Transverse colon (tissue), 4 donors: ENCODE measurements at regions of chr4 and their contacts with region 1.

Region 1: DNA sequence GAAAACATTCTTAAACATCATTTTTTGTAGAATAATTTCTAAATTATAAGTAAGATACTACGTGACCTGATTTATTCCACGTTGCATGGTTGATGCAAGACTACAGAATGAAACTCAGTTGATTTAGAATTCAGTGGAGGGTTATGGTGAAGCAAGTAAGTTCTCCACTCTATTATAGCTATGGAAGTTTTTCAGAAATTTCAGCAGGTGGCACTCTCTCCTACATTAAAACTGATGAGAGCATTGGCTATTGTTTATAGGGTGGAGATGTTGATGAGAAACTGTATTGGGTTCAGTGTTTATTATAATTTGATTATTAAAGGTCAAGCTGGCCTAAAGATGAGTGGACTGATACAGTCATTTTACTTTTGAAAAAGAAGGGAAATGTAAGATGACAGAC is 88.0 kb downstream of the FNIP2 start:
- DNase-seq: no peak
- H3K4me3 ChIP-seq: no peak overlapping the region
- H3K27ac ChIP-seq: no peak overlapping the region
- H3K4me1 ChIP-seq: no peaks in the 10 kb centered on the region
- H3K27me3 ChIP-seq: no peaks in the 10 kb centered on the region
- CTCF ChIP-seq: peak; percentile 42 to 57 (median 47)
- EP300 ChIP-seq: no peak
- POLR2A ChIP-seq: no peak

Region 2: GRCh38 chr4:158722917-158723793 is 133.7 kb before region 1 on chr4 and contains the start of gene PPID:
- in situ Hi-C with region 1: loop called in 2 of 4 experiments (anchors 5 to 10 kb)
- intact Hi-C with region 1: no loop called
- DNase-seq: peak; percentile 90
- H3K4me3 ChIP-seq: peak within 1 kb of the TSS; percentile 71 to 81 (median 76)
- H3K27ac ChIP-seq: peak within 1 kb of the TSS; percentile 92 to 96 (median 92)
- H3K4me1 ChIP-seq: peaks cover 0 to 16% (median 4%) of the 10 kb centered on the region in 4 donors
- H3K27me3 ChIP-seq: no peaks in the 10 kb centered on the region
- CTCF ChIP-seq: no peak
- EP300 ChIP-seq: no peak
- POLR2A ChIP-seq: peak; percentile 78
- total RNA-seq, gene PPID: 7.9 to 21.8 (median 12.8) TPM

Region 3: DNA sequence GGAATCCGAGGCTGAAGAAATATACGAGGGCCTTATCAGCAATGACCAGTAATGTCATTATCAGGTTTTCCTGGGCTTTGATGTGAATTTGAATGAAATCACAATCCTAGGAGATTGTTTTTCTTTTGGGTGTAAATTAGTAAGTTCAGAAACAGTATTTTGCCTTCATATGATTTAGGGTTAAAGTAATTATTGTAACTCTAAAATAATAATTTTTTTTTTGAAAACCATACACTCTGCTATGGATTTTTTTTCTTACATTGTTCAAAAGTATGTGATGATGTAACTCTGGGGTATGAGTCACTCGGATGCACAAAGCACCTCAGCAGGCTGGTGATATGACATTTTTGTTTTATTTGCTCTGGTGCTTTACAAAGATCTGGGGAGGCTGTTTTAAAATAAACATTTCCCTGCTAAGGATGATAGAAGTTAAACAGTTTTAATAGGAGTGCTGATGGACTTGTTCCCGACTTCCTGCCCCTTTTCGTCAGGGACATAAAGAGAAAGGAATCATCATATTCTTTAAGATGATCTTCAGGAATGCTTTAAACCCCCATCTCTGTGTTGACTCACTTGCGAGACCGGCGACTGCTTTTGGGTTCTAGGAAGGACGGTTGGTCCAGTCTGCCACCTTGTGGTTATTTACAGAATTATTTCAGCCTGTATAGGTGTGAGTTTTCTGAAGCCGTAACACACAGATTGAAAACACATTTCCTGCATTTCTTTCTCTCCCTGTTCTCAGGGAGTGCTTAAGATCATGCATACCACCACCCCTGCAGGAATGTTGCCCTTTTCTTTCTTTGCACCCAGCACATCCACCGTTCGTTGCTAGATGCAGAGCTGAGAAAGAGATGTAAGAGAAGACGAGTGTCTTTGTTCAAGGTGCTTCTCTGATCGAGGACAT is 318.5 kb after region 1 on chr4:
- in situ Hi-C with region 1: loop called in 2 of 4 experiments (anchors 10 kb)
- intact Hi-C with region 1: no loop called
- DNase-seq: peak; percentile 62
- H3K4me3 ChIP-seq: no peak overlapping the region
- H3K27ac ChIP-seq: peak overlapping the region in 3 of 4 donors; percentile 45 to 62 (median 57)
- H3K4me1 ChIP-seq: peaks cover 6 to 68% (median 19%) of the 10 kb centered on the region in 4 donors
- H3K27me3 ChIP-seq: no peaks in the 10 kb centered on the region
- CTCF ChIP-seq: peak; percentile 77 to 92 (median 85)
- EP300 ChIP-seq: no peak
- POLR2A ChIP-seq: no peak

Region 4: GRCh38 chr4:159191989-159192388 is 335.1 kb after region 1 on chr4:
- in situ Hi-C with region 1: loop called in 2 of 4 experiments (anchors 10 kb)
- intact Hi-C with region 1: loop called (anchors 2 kb)
- DNase-seq: no peak
- H3K4me3 ChIP-seq: no peak overlapping the region
- H3K27ac ChIP-seq: no peak overlapping the region
- H3K4me1 ChIP-seq: peaks cover 0 to 9% (median 0%) of the 10 kb centered on the region in 4 donors
- H3K27me3 ChIP-seq: no peaks in the 10 kb centered on the region
- CTCF ChIP-seq: peak in 3 of 5 experiments; percentile 13 to 28 (median 21)
- EP300 ChIP-seq: no peak
- POLR2A ChIP-seq: no peak

Region 5: DNA sequence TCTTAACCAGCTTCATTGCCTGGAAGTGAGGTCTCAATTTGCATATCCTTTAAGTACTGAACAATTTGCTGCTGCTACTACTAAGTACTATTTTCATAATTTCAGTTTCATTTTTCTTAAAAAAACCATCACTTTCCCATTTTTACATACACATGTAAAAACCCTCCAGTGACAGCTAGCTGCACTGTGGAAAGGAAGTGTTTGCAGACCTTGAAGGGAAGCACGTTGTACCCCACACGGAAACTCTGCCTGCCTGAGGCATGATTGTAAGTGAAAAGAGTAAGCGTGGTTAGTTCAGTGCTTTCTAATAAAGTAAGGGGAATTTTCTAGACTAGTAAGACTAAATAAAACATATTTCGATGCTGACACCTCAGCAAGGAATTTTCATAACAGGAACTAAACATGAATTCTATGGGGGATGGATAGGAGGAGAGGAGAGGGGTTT is 349.6 kb after region 1 on chr4:
- in situ Hi-C with region 1: loop called in 2 of 4 experiments (anchors 10 kb)
- intact Hi-C with region 1: loop called (anchors 5 kb)
- DNase-seq: no peak
- H3K4me3 ChIP-seq: no peak overlapping the region
- H3K27ac ChIP-seq: no peak overlapping the region
- H3K4me1 ChIP-seq: peaks cover 0 to 34% (median 0%) of the 10 kb centered on the region in 4 donors
- H3K27me3 ChIP-seq: no peaks in the 10 kb centered on the region
- CTCF ChIP-seq: no peak
- EP300 ChIP-seq: no peak
- POLR2A ChIP-seq: no peak